ENCODE measurements at regions of chr5 and their contacts with region 1.

Region 1: GRCh38 chr5:139560752-139561654 is at the start of gene UBE2D2:
- DNase-seq: peak; percentile 96 to 99 (median 97)
- H3K4me3 ChIP-seq: peak within 1 kb of the TSS; percentile 60 to 90
- H3K4me3 Mint-ChIP-seq: peak within 1 kb of the TSS; percentile 94 to 99 (median 98)
- H3K27ac ChIP-seq: peak within 1 kb of the TSS; percentile 93
- H3K27ac Mint-ChIP-seq: peak within 1 kb of the TSS; percentile 93 to 99 (median 96)
- H3K4me1 ChIP-seq: peaks cover 42% of the 10 kb centered on the region
- H3K4me1 Mint-ChIP-seq: peaks cover 25 to 48% (median 37%) of the 10 kb centered on the region in 4 donors
- H3K27me3 ChIP-seq: no peaks in the 10 kb centered on the region
- H3K27me3 Mint-ChIP-seq: no peaks in the 10 kb centered on the region
- total RNA-seq, gene UBE2D2: 160 to 169 TPM

Region 2: DNA sequence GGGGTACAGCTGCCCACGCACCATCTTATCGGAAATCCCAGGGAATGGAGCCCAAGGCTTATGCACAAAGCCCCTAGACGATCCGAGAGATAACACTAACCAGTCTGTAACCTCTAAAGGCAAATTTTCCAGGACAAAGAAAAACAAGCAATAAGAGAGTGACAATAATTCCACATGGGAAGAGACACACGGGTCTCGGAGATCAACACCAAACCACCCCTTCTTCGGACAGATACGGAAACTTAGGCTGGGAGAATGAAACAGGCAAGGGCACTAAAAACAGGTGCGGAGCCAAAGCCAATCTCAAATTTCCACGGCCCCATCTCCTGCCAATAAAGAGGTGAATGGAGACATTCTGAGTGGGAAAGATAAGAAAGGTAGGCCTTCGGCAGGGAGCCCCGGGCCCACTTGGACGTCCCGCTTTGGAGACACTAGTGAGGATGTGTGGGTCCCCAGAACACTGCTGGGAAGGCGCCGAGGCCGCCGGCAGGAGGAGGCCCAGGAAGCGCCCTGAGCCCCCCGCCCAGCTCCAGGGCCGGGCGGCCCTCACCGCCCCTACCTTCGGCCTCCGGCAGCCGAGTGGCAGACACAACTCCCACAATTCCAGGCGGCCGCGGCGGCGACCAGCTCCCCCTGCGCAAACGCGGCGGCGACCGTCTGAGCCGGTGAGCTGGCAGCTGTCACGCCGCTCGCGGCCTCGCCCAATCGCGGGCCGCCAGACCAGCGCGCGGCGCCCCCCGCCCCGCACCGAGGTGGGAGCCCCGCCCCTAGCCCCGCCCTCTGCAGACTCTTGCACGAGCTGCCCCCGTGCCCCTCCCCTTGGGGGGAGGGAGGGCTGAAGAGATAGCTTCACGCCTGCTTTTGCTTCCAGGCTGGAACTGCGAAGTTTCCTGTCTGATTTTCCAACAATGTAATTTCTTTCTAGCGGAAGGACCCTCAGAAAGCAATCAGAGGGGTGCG is 363.0 kb before region 1 on chr5 and contains the start of gene SIL1:
- CTCF ChIA-PET with region 1: no interaction called
- POLR2A ChIA-PET with region 1: no interaction called
- intact Hi-C with region 1: loop called (anchors 1 kb)
- DNase-seq: peak; percentile 90 to 93 (median 91)
- H3K4me3 ChIP-seq: peak within 1 kb of the TSS; percentile 59 to 69
- H3K4me3 Mint-ChIP-seq: peak within 1 kb of the TSS; percentile 87 to 95 (median 89)
- H3K27ac ChIP-seq: peak within 1 kb of the TSS; percentile 86
- H3K27ac Mint-ChIP-seq: peak within 1 kb of the TSS; percentile 84 to 98 (median 94)
- H3K4me1 ChIP-seq: peaks cover 13% of the 10 kb centered on the region
- H3K4me1 Mint-ChIP-seq: peaks cover 13 to 29% (median 19%) of the 10 kb centered on the region in 4 donors
- H3K27me3 ChIP-seq: no peaks in the 10 kb centered on the region
- H3K27me3 Mint-ChIP-seq: no peaks in the 10 kb centered on the region
- total RNA-seq, gene SIL1: 16.4 to 16.7 TPM

Region 3: GRCh38 chr5:139273572-139274289 is 287.3 kb before region 1 on chr5:
- CTCF ChIA-PET with region 1: no interaction called
- POLR2A ChIA-PET with region 1: no interaction called
- intact Hi-C with region 1: loop called (anchors 5 kb)
- DNase-seq: peak; percentile 82 to 91 (median 86)
- H3K4me3 ChIP-seq: peak overlapping the region; percentile 14 to 65
- H3K4me3 Mint-ChIP-seq: peak overlapping the region; percentile 85 to 91 (median 87)
- H3K27ac ChIP-seq: peak overlapping the region; percentile 58
- H3K27ac Mint-ChIP-seq: peak overlapping the region; percentile 74 to 94 (median 90)
- H3K4me1 ChIP-seq: peaks cover 55% of the 10 kb centered on the region
- H3K4me1 Mint-ChIP-seq: peaks cover 29 to 55% (median 38%) of the 10 kb centered on the region in 4 donors
- H3K27me3 ChIP-seq: no peaks in the 10 kb centered on the region
- H3K27me3 Mint-ChIP-seq: no peaks in the 10 kb centered on the region

Region 4: DNA sequence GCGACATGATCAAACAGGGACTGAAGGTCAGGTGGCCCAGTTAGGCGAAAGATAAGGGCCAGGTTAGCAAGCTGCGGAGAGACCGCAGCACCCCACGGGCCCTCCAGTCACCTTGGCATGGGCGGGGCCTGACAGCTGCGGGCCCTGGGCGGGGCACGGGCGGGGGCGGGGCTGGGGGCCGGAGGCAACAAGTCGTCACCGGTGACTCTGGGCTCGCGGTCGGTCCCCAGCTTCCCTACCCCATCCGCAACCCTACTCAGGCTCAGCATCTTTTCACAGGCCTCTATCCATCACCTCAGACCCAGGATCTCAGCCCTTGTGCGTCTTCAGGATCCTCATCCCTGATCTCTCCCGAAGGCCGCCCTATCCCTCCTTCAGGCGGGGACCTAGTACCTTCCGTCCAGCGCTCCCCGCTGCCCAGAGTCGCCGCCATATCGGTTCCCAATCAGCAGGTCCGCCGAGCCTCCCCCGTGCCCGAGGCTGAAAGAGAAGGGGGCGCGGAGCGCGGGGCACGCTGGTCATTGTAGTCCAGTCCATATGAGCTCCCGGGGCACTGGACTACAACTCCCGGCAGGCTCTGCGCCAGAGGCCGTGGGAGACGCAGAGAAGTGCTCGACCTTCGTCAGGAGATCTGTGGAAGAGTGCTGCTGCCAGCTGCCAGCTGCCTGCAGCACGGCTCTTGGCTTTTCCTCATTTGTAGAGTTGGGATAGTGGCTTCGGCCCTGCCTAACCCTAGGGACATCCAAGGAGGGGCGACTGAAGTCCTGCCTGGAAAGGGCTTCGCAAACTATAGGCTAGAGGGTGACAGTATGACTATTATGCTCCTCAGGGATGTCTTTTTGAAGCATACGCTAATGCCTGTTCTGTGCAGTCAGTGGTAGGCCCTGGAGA is 121.7 kb before region 1 on chr5 and contains the start of gene DNAJC18:
- CTCF ChIA-PET with region 1: interaction called, 4 read pairs
- POLR2A ChIA-PET with region 1: interaction called, 22 read pairs
- intact Hi-C with region 1: loop called (anchors 1 kb)
- DNase-seq: peak; percentile 84 to 90 (median 86)
- H3K4me3 ChIP-seq: peak within 1 kb of the TSS; percentile 83 to 91
- H3K4me3 Mint-ChIP-seq: peak within 1 kb of the TSS; percentile 96 to 99 (median 98)
- H3K27ac ChIP-seq: peak within 1 kb of the TSS; percentile 99
- H3K27ac Mint-ChIP-seq: peak within 1 kb of the TSS; percentile 93 to 100 (median 100)
- H3K4me1 ChIP-seq: peaks cover 31% of the 10 kb centered on the region
- H3K4me1 Mint-ChIP-seq: peaks cover 32 to 63% (median 41%) of the 10 kb centered on the region in 4 donors
- H3K27me3 ChIP-seq: no peaks in the 10 kb centered on the region
- H3K27me3 Mint-ChIP-seq: no peaks in the 10 kb centered on the region
- total RNA-seq, gene DNAJC18: 6.2 to 7.3 TPM

Region 5: DNA sequence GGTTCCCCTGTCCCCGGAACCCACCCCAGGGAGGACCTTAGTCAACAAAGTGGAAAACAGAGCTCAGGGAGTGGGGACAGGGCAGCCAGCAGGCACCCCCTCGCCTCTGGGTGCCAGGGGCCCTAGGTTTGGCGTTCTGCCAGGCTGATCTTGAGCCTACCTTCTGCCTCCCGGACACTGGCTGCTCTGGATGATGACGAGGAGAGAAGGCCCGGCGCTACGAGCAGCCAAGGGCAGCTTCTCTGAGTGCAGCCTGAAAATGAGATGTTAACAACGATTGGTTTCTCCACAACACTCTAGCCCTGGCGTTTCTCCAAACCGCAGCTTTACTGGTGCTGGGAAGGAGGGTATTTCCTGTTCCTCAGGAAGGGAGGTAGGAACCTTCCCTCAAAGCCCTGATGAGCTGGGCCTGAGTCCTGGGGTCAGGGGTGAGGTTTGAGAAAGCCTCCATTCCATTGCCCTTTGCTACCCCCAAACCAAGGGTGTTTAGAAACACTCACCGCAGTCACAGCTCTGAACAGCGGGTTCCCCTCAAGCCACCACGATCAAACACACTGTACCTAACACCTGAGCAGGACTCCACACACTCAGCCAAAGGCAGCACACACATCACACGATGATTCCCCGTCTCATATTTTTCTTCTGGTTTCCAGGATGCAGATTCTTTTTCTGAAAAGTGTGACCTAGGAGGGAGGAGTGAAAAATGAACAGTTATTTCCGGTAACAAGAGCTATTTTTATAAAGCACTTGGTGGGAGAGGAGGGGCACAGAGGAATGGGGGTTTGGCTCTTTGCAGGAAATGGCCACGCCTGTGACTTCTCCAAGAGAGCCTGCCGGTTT is 78.7 kb before region 1 on chr5 and contains the start of gene STING1:
- CTCF ChIA-PET with region 1: no interaction called
- POLR2A ChIA-PET with region 1: interaction called, 16 read pairs
- intact Hi-C with region 1: no loop called
- DNase-seq: peak; percentile 78 to 83 (median 80)
- H3K4me3 ChIP-seq: peak within 1 kb of the TSS; percentile 82 to 95
- H3K4me3 Mint-ChIP-seq: peak within 1 kb of the TSS; percentile 92 to 98 (median 94)
- H3K27ac ChIP-seq: peak within 1 kb of the TSS; percentile 86
- H3K27ac Mint-ChIP-seq: peak within 1 kb of the TSS; percentile 90 to 98 (median 97)
- H3K4me1 ChIP-seq: peaks cover 46% of the 10 kb centered on the region
- H3K4me1 Mint-ChIP-seq: peaks cover 21 to 57% (median 39%) of the 10 kb centered on the region in 4 donors
- H3K27me3 ChIP-seq: no peaks in the 10 kb centered on the region
- H3K27me3 Mint-ChIP-seq: no peaks in the 10 kb centered on the region
- total RNA-seq, gene STING1: 141 to 144 TPM

Region 6: GRCh38 chr5:139543423-139543991 is 17.5 kb before region 1 on chr5:
- CTCF ChIA-PET with region 1: interaction called, 4 read pairs
- POLR2A ChIA-PET with region 1: interaction called, 5 read pairs
- intact Hi-C with region 1: loop called (anchors 2 kb)
- DNase-seq: peak; percentile 22 to 44 (median 33)
- H3K4me3 ChIP-seq: no peak overlapping the region
- H3K4me3 Mint-ChIP-seq: peak overlapping the region; percentile 7 to 63 (median 33)
- H3K27ac ChIP-seq: no peak overlapping the region
- H3K27ac Mint-ChIP-seq: peak overlapping the region in 1 of 7 donors; percentile 70
- H3K4me1 ChIP-seq: peaks cover 9% of the 10 kb centered on the region
- H3K4me1 Mint-ChIP-seq: peaks cover 0 to 7% (median 1%) of the 10 kb centered on the region in 4 donors
- H3K27me3 ChIP-seq: no peaks in the 10 kb centered on the region
- H3K27me3 Mint-ChIP-seq: peaks cover 1 to 3% of the 10 kb centered on the region in 2 donors

Region 7: DNA sequence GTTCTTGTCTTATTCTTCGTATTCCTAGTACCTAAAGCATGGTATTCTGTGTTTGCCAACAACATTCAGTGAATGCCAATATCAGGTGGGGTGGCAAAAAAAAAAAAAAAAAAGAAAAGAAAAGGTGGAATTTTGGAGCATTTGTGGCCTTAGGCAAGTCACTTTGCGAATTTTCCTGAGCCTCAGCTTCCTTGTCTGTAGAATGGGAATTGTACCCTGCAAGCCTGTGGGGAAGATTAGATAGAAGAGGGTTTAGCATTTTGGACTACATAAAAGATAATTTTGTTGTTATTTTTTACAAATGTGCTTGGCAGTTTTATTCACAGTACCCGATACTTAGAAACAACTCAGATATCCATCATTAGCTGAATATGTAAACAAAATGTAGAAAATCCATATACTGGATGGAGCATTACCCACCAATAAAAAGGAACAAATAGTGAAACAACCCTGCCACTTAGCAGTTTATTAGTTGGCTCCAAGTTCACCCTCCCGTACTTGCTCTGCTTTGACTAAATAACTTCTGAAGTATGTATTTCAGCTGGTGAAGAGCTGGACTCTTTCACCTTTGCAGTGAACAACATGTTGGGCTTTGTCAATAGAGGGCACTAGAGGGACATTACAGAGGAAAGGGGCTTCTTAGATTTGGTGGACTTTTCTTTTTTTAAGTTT is 13.8 kb after region 1 on chr5:
- CTCF ChIA-PET with region 1: interaction called, 98 read pairs
- POLR2A ChIA-PET with region 1: interaction called, 114 read pairs
- intact Hi-C with region 1: loop called (anchors 1 kb)
- DNase-seq: peak in 4 of 5 donors; percentile 37 to 45 (median 40)
- H3K4me3 ChIP-seq: no peak overlapping the region
- H3K4me3 Mint-ChIP-seq: peak overlapping the region in 6 of 8 donors; percentile 5 to 67 (median 44)
- H3K27ac ChIP-seq: peak overlapping the region; percentile 45
- H3K27ac Mint-ChIP-seq: peak overlapping the region; percentile 7 to 84 (median 64)
- H3K4me1 ChIP-seq: peaks cover 75% of the 10 kb centered on the region
- H3K4me1 Mint-ChIP-seq: peaks cover 54 to 78% (median 67%) of the 10 kb centered on the region in 4 donors
- H3K27me3 ChIP-seq: no peaks in the 10 kb centered on the region
- H3K27me3 Mint-ChIP-seq: no peaks in the 10 kb centered on the region

Measured in CD4-positive, alpha-beta memory T cell (primary cell).